Posterior vena cava (tissue), 2 donors: ENCODE measurements at regions of chr6 and their contacts with region 1.

Region 1: GRCh38 chr6:166325383-166326042 is 16.8 kb downstream of the SFT2D1 start:
- DNase-seq: no peak

Region 2: GRCh38 chr6:166286839-166287271 is 38.7 kb before region 1 on chr6:
- intact Hi-C with region 1: no loop called
- DNase-seq: no peak

Region 3: GRCh38 chr6:167044696-167045095 is 719.2 kb after region 1 on chr6:
- intact Hi-C with region 1: no loop called
- DNase-seq: no peak

Region 4: DNA sequence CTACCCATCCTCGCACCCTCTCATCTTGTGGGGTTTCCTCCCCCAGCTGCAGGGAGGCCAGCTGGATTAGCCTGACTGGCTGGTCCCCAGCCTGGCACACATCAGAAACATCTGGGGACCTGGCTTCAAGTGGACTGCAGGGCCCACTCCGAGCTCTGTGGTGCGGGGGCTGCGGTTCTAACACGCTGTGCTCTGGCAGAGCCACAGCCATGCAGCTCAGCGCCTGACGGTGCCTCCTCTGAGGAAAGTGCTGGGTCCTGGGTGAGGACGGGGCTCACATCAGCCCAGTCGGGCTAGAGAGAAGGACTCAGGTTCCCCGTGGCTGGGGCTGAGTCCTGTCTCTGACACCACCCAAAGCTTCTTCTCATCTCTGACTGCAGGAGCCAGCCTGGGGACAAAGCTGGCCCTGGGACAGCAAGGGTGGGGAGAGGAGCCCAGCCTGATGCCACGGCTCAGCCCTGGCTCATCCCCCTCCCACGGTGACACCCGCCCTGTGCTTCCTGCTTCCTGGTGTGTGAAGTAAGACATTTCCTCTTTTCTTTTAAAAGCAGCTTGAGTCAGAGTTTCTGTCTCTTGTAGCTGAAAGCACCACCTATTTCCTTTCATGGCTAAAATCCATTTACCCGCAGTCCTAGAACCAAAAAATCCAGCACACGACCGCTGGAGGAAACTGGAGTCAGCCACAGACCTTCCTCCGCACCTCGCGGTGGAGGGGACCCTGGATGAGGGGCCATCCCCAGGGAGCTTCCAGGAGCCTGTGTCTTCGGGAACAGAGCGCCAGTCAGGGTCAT is 1373.8 kb after region 1 on chr6:
- intact Hi-C with region 1: loop called in 1 of 2 experiments (anchors 10 kb)
- DNase-seq: peak; percentile 92